CD8-positive, alpha-beta memory T cell (primary cell): ENCODE measurements at regions of chr3 and their contacts with region 1.

Region 1: GRCh38 chr3:150408221-150409102 is at the start of gene TSC22D2:
- DNase-seq: peak; percentile 94 to 98 (median 97)
- H3K4me3 ChIP-seq: peak within 1 kb of the TSS; percentile 94
- H3K4me3 Mint-ChIP-seq: peak within 1 kb of the TSS; percentile 86 to 100 (median 97)
- H3K27ac ChIP-seq: peak within 1 kb of the TSS; percentile 91
- H3K27ac Mint-ChIP-seq: peak within 1 kb of the TSS; percentile 86 to 100 (median 98)
- H3K4me1 ChIP-seq: peaks cover 28% of the 10 kb centered on the region
- H3K4me1 Mint-ChIP-seq: peaks cover 35 to 40% (median 38%) of the 10 kb centered on the region in 3 donors
- H3K27me3 ChIP-seq: no peaks in the 10 kb centered on the region
- H3K27me3 Mint-ChIP-seq: peaks cover 0 to 2% of the 10 kb centered on the region in 2 donors
- total RNA-seq, gene TSC22D2: 20.9 to 22.3 TPM

Region 2: GRCh38 chr3:150384296-150385212 is 23.9 kb before region 1 on chr3:
- CTCF ChIA-PET with region 1: interaction called, 24 read pairs
- POLR2A ChIA-PET with region 1: interaction called, 5 read pairs
- DNase-seq: peak in 4 of 5 donors; percentile 3 to 64 (median 58)
- H3K4me3 ChIP-seq: peak overlapping the region; percentile 21
- H3K4me3 Mint-ChIP-seq: peak overlapping the region; percentile 0 to 77 (median 72)
- H3K27ac ChIP-seq: no peak overlapping the region
- H3K27ac Mint-ChIP-seq: peak overlapping the region in 7 of 8 donors; percentile 1 to 85 (median 60)
- H3K4me1 ChIP-seq: peaks cover 16% of the 10 kb centered on the region
- H3K4me1 Mint-ChIP-seq: peaks cover 21 to 31% (median 31%) of the 10 kb centered on the region in 3 donors
- H3K27me3 ChIP-seq: no peaks in the 10 kb centered on the region
- H3K27me3 Mint-ChIP-seq: no peaks in the 10 kb centered on the region

Region 3: DNA sequence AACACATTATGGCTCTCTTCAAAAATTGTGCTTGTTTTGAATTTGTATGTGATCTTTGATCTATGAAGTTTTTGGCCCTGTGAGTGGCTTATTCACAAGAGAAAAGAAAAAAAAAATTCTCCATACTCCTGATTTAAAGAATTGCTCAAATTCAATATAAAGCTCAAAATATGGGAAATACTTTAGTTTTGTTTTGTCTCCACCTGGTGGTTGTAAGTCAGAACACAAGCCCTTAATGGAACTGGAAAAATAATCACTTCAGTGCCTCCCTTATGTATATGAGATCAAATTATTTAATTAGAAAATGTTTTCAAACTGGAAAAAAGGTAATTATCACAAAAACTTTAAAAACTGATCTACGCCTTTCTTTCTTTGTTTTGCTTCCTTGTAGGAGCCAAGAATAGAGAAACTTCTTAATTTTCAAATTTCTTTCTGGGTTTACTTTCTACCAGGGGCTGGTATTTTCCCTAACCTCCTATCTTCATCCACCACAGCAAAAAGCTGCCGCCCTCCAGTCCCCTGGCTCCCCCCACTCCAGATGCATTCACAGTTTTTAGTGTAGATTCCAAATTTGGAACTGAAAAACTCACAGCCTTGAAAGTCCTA is 87.2 kb after region 1 on chr3:
- CTCF ChIA-PET with region 1: interaction called, 29 read pairs
- POLR2A ChIA-PET with region 1: no interaction called
- DNase-seq: peak in 2 of 5 donors; percentile 23 to 40
- H3K4me3 ChIP-seq: no peak overlapping the region
- H3K4me3 Mint-ChIP-seq: no peak overlapping the region
- H3K27ac ChIP-seq: no peak overlapping the region
- H3K27ac Mint-ChIP-seq: no peak overlapping the region
- H3K4me1 ChIP-seq: no peaks in the 10 kb centered on the region
- H3K4me1 Mint-ChIP-seq: no peaks in the 10 kb centered on the region
- H3K27me3 ChIP-seq: no peaks in the 10 kb centered on the region
- H3K27me3 Mint-ChIP-seq: peaks cover 2 to 3% of the 10 kb centered on the region in 2 donors